ENCODE measurements at regions of chr12 and their contacts with region 1.

Region 1: DNA sequence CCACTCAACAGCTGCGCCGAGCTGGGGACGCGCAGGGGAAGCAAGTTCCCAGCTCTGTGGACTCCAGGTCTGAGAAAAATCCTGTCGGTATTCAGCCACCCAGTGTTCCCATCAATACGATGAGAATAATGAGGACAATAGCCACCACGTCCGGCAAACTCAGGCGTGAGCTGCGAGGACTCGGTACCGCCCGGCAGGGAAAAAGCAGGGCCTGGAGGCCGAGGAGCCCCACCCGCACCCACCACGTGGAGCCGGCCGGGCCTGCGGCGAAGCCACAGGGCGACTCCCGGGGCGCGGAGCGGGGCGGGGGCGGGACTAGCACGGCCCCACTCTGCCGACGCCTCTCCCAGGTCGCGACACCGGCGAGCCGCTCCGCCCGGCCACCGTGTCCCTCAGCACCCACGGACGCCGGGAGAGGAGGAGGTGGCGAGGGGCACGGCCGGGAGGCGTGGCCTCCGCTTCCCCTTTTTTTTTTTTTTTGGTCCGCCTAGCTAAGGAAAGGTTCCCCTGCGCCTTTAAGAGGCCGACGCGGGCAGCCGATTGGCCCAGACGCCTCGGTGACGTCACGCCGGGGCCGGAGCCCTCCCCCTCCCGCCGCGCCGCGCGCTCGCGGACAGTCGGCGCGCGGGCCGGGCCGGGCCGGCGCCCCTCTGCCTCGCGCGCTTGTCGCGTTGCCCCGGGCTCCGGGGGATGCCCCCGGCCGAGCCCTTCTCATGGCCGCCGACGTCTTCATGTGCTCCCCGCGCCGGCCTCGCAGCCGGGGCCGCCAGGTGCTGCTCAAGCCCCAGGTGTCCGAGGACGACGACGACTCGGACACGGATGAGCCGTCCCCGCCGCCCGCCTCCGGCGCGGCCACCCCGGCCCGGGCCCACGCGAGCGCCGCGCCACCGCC is at the start of gene MLXIP:
- DNase-seq: peak; percentile 90 to 95
- ATAC-seq: peak; percentile 70 to 71
- H3K4me3 ChIP-seq: peak within 1 kb of the TSS; percentile 65 to 86 (median 76)
- H3K27ac ChIP-seq: peak within 1 kb of the TSS; percentile 91 to 97 (median 96)
- H3K4me1 ChIP-seq: peaks cover 41 to 43% of the 10 kb centered on the region in 2 donors
- H3K27me3 ChIP-seq: no peaks in the 10 kb centered on the region
- CTCF ChIP-seq: no peak
- POLR2A ChIP-seq: peak; percentile 99 to 100
- total RNA-seq, gene MLXIP: 36.6 to 89.4 (median 79.7) TPM

Region 2: DNA sequence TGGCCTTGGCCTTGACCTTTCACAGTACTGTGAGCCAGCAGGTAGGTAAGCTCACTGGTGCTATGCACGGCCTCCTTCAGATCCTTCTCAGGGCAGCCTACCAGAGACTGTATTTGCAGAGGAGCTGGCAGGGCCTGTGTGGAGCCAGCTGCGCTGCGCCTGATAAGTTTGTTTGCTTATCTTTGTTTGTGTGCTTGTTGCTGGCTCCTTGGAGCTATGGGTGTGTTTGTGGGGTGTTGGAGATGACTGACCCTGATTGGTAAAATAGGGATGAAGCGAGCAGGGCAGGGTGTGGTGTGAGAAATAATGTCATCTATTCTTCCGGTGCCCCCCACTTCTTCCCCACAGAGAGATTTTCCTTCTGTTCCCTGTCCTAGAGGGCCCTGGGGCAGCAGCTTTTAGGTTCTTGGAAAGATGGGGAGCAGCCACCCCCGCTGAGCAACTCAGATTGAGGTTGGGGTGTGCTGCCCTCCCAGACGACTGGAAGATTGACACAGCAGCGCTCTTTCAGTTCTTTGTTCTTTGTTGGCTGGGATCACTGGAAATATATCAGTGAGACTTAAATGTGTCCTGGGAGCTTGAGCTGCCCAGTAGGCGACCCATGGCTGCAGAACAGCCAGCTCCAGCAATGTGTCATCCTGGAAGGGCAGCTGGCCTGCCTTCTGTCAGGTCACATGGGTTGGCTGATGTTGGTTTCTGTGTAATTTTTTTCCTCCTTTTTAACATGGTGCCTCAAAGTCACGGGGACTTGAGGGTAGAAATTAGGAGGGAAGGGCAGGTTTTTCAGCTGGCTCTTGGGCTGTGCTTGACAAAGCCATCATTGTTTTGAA is 19.8 kb after region 1 on chr12:
- in situ Hi-C with region 1: no loop called
- intact Hi-C with region 1: loop called (anchors 2 kb)
- DNase-seq: peak; percentile 78 to 91
- ATAC-seq: peak; percentile 70 to 77
- H3K4me3 ChIP-seq: peak overlapping the region; percentile 10 to 40 (median 20)
- H3K27ac ChIP-seq: peak overlapping the region; percentile 90 to 97 (median 94)
- H3K4me1 ChIP-seq: peaks cover 86 to 97% of the 10 kb centered on the region in 2 donors
- H3K27me3 ChIP-seq: no peaks in the 10 kb centered on the region
- CTCF ChIP-seq: no peak
- POLR2A ChIP-seq: peak; percentile 42 to 56

Region 3: DNA sequence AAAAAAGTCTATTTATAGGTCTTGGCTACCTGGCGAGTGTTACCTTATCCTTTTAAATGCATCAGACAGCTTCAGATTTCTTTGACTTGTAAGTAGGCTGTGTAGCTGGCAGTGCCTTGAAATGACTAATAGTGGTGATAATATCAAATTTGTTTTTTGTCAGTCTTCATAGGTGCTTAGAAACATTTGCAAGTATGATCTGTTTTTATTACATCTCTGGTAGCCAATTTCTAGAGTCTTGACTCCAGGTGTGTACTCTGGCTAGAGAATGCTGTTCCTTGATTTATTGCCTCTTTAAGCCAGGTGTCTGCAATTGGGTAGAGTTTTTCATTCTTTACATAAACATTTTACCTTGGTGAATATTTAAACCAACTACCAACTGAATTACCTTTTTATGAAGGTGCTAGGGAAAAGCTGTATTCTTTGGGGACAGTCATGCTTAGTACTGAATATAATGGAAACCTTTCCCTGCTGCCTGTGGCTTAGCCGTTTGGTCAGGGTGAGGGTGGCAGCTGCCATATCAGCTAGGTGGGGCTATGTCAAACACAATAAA is 32.8 kb after region 1 on chr12:
- in situ Hi-C with region 1: no loop called
- intact Hi-C with region 1: loop called (anchors 2 kb)
- DNase-seq: peak; percentile 13 to 54
- ATAC-seq: peak; percentile 82 to 91
- H3K4me3 ChIP-seq: no peak overlapping the region
- H3K27ac ChIP-seq: peak overlapping the region; percentile 82 to 97 (median 94)
- H3K4me1 ChIP-seq: peaks cover 66 to 73% of the 10 kb centered on the region in 2 donors
- H3K27me3 ChIP-seq: no peaks in the 10 kb centered on the region
- CTCF ChIP-seq: no peak
- POLR2A ChIP-seq: peak in 1 of 2 donors; percentile 27